WTC11 (cell line): ENCODE measurements at regions of chr1 and their contacts with region 1.

Region 1: GRCh38 chr1:157156058-157156541 is 17.9 kb upstream of the ETV3 start:
- DNase-seq: peak; percentile 93
- ATAC-seq: peak; percentile 83
- H3K4me3 Mint-ChIP-seq: peak overlapping the region; percentile 54
- H3K27ac Mint-ChIP-seq: no peak overlapping the region
- H3K4me1 Mint-ChIP-seq: peaks cover 57% of the 10 kb centered on the region
- H3K27me3 Mint-ChIP-seq: no peaks in the 10 kb centered on the region; the same call in 1 of the 2 replicates
- CTCF ChIP-seq: peak; percentile 99

Region 2: GRCh38 chr1:156821801-156822200 is 334.3 kb before region 1 on chr1:
- CTCF ChIA-PET with region 1: no interaction called
- POLR2A ChIA-PET with region 1: no interaction called
- DNase-seq: no peak
- ATAC-seq: no peak
- H3K4me3 Mint-ChIP-seq: no peak overlapping the region
- H3K27ac Mint-ChIP-seq: no peak overlapping the region
- H3K4me1 Mint-ChIP-seq: no peaks in the 10 kb centered on the region
- H3K27me3 Mint-ChIP-seq: peaks cover 59% of the 10 kb centered on the region
- CTCF ChIP-seq: no peak

Region 3: DNA sequence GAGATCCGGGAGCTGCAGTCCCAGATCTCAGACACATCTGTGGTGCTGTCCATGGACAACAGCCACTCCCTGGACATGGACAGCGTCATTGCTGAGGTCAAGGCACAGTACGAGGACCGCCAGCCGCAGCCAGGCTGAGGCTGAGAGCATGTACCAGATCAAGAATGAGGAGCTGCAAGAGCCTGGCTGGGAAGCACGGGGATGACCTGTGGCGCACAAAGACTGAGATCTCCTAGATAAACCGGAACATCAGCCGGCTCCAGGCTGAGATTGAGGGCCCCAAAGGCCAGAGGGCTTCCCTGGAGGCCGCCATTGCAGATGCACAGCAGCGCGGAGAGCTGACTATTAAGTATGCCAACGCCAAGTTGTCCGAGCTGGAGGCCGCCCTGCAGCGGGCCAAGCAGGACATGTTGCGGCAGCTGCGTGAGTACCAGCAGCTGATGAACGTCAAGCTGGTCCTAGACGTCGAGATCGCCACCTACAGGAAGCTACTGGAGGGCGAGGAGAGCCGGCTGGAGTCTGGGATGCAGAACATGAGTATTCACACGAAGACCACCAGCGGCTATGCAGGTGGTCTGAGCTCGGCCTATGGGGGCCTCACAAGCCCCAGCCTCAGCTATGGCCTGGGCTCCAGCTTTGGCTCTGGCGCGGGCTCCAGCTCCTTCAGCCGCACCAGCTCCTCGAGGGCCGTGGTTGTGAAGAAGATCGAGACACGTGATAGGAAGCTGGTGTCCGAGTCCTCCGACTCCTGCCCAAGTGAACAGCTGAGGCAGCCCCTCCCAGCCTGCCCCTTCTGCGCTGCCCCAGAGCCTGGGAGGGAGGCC is 81.9 kb before region 1 on chr1:
- CTCF ChIA-PET with region 1: interaction called, 22 read pairs
- POLR2A ChIA-PET with region 1: no interaction called
- DNase-seq: peak; percentile 83
- ATAC-seq: peak; percentile 67
- H3K4me3 Mint-ChIP-seq: no peak overlapping the region
- H3K27ac Mint-ChIP-seq: no peak overlapping the region
- H3K4me1 Mint-ChIP-seq: peaks cover 9% of the 10 kb centered on the region
- H3K27me3 Mint-ChIP-seq: peaks cover 11% of the 10 kb centered on the region
- CTCF ChIP-seq: peak; percentile 46; the same call in 1 of the 2 replicates

Region 4: GRCh38 chr1:157099630-157100009 is 56.5 kb before region 1 on chr1 and contains the start of gene ETV3L:
- CTCF ChIA-PET with region 1: interaction called, 34 read pairs
- POLR2A ChIA-PET with region 1: interaction called, 3 read pairs
- DNase-seq: no peak
- ATAC-seq: peak; percentile 65; the same call in 1 of the 2 replicates
- H3K4me3 Mint-ChIP-seq: no peak within 1 kb of the TSS
- H3K27ac Mint-ChIP-seq: no peak within 1 kb of the TSS; the same call in 1 of the 2 replicates
- H3K4me1 Mint-ChIP-seq: peaks cover 7% of the 10 kb centered on the region
- H3K27me3 Mint-ChIP-seq: no peaks in the 10 kb centered on the region; the same call in 1 of the 2 replicates
- CTCF ChIP-seq: no peak
- total RNA-seq, gene ETV3L: 0.13 to 0.30 TPM (median 0.25 TPM) in 3 replicates

Region 5: GRCh38 chr1:157117527-157118057 is 38.5 kb before region 1 on chr1:
- CTCF ChIA-PET with region 1: interaction called, 33 read pairs
- POLR2A ChIA-PET with region 1: no interaction called
- DNase-seq: no peak
- ATAC-seq: no peak
- H3K4me3 Mint-ChIP-seq: no peak overlapping the region
- H3K27ac Mint-ChIP-seq: peak overlapping the region; percentile 58; the same call in 1 of the 2 replicates
- H3K4me1 Mint-ChIP-seq: peaks cover 69% of the 10 kb centered on the region
- H3K27me3 Mint-ChIP-seq: peaks cover 5% of the 10 kb centered on the region; the same call in 1 of the 2 replicates
- CTCF ChIP-seq: no peak

Region 6: DNA sequence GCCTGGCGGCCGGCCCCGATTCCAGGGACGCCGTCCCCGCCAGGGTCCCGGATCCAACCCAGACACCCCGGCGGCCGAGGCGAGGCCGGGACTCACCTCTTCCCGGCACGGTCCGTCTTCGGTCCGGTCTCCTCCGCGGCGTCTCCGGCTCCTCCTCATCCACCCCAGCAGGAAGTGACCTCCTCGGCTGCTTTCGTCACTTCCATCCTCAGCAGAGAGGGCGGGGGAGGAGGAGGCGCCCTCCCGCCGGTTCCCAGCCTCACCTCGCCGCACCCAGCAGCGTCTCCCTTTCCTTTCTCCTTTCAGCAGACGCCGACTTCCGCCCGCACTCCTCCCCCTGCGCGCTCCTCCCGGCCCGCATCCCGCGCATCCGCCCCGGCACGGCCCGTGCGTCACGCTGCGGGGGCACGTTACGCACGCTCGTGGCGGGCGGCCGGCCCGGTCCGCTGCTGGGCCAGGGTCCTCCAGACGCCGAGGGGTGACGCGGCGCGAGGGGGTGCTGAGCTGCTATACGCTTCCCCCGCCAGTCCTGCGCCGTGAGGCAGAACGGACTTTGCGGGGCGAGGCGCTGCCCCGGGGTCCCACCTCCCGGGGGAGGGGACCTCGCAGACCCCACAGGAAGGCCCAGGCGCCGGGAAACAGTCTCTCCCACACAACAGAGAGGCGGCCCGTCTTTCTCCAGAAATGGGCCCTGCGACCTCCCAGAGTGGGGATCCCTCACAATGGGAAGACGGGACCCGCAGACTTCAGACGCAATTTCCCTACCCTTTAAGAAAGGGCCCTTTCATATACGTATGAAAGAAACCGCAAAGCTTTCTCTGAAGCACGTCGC is 17.7 kb before region 1 on chr1 and contains the start of gene ETV3:
- CTCF ChIA-PET with region 1: interaction called, 114 read pairs
- POLR2A ChIA-PET with region 1: interaction called, 6 read pairs
- DNase-seq: peak; percentile 86
- ATAC-seq: peak; percentile 77
- H3K4me3 Mint-ChIP-seq: peak within 1 kb of the TSS; percentile 94
- H3K27ac Mint-ChIP-seq: peak within 1 kb of the TSS; percentile 97
- H3K4me1 Mint-ChIP-seq: peaks cover 56% of the 10 kb centered on the region
- H3K27me3 Mint-ChIP-seq: peaks cover 6% of the 10 kb centered on the region
- CTCF ChIP-seq: no peak
- total RNA-seq, gene ETV3: 21.3 to 26.0 TPM (median 22.1 TPM) in 3 replicates

Region 7: DNA sequence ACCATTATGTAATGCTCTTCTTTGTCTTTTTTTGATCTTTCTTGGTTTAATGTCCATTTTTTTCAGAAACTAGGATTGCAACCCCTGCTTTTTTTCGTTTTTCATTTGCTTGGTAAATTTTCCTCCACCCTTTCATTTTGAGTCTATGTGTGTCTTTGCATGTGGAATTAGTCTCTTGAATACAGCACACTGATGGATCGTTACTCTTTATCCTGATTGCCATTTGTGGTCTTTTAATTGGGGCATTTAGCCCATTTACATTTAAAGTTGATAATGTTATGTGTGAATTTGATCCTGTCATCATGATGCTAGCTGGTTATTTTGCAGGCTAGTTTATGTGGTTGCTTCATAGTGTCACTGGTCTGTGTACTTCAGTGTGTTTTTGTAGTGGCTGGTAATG is 57.7 kb after region 1 on chr1:
- CTCF ChIA-PET with region 1: no interaction called
- POLR2A ChIA-PET with region 1: no interaction called
- DNase-seq: no peak
- ATAC-seq: no peak
- H3K4me3 Mint-ChIP-seq: no peak overlapping the region
- H3K27ac Mint-ChIP-seq: no peak overlapping the region
- H3K4me1 Mint-ChIP-seq: no peaks in the 10 kb centered on the region; the same call in 1 of the 2 replicates
- H3K27me3 Mint-ChIP-seq: peaks cover 11% of the 10 kb centered on the region
- CTCF ChIP-seq: no peak